ENCODE measurements at regions of chr4 and their contacts with region 1.

Region 1: GRCh38 chr4:142405021-142405694 is 440.9 kb downstream of the INPP4B start:
- DNase-seq: peak; percentile 73
- H3K4me3 Mint-ChIP-seq: peak overlapping the region; percentile 97
- H3K27ac Mint-ChIP-seq: peak overlapping the region; percentile 100
- H3K4me1 Mint-ChIP-seq: peaks cover 72% of the 10 kb centered on the region
- H3K27me3 Mint-ChIP-seq: no peaks in the 10 kb centered on the region

Region 2: DNA sequence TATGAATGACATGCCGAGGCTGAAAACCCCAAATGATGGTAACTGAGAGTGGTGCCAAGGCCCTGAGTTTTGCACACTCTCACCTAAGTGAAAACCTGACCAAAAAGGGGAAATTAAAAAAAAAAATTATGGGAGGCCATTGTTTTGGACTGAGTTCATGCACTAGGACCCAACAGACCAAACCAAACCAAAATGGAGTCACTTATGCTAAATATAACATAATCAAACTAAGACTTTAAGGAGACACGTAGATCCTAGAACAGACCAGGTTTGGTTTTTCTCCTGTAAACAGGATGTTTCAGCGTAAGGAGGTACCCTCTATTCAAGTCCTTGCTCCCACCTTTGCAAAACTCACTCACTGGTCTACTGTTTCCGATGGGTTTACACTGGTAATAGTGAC is 12.0 kb before region 1 on chr4:
- CTCF ChIA-PET with region 1: no interaction called
- DNase-seq: no peak
- H3K4me3 Mint-ChIP-seq: no peak overlapping the region
- H3K27ac Mint-ChIP-seq: no peak overlapping the region
- H3K4me1 Mint-ChIP-seq: peaks cover 68% of the 10 kb centered on the region
- H3K27me3 Mint-ChIP-seq: no peaks in the 10 kb centered on the region

Region 3: GRCh38 chr4:142416711-142417275 is 11.6 kb after region 1 on chr4:
- CTCF ChIA-PET with region 1: interaction called, 23 read pairs
- DNase-seq: peak; percentile 22
- H3K4me3 Mint-ChIP-seq: peak overlapping the region; percentile 59
- H3K27ac Mint-ChIP-seq: peak overlapping the region; percentile 98
- H3K4me1 Mint-ChIP-seq: peaks cover 43% of the 10 kb centered on the region
- H3K27me3 Mint-ChIP-seq: no peaks in the 10 kb centered on the region

Region 4: DNA sequence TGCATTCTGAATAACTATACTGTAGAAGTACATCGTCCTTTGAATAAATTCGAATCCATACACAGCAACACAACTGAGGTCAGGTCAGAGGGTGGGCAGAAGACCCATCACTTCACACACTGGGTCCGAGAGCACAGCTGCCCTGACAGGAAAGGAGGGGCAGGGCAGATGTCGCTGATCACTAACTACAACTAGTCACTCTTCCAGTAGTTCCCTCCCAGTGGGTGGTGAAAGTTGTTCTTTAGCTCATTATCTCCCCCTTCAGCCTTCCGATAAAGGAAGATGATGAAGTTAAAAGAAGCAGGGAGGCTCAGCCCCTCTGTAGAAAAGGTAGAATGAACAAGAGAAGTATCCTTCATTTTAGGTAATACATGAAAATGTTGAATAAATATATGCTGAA is 162.0 kb after region 1 on chr4:
- CTCF ChIA-PET with region 1: interaction called, 21 read pairs
- DNase-seq: peak; percentile 63
- H3K4me3 Mint-ChIP-seq: peak overlapping the region; percentile 80
- H3K27ac Mint-ChIP-seq: peak overlapping the region; percentile 90
- H3K4me1 Mint-ChIP-seq: peaks cover 66% of the 10 kb centered on the region
- H3K27me3 Mint-ChIP-seq: no peaks in the 10 kb centered on the region